CD14-positive monocyte (primary cell): ENCODE measurements at regions of chr2 and their contacts with region 1.

Region 1: GRCh38 chr2:134778368-134778767 is 59.6 kb upstream of the TMEM163 start:
- DNase-seq: no peak
- H3K4me3 ChIP-seq: no peak overlapping the region
- H3K4me3 Mint-ChIP-seq: no peak overlapping the region
- H3K27ac ChIP-seq: no peak overlapping the region
- H3K27ac Mint-ChIP-seq: no peak overlapping the region
- H3K4me1 ChIP-seq: peaks cover 6 to 12% of the 10 kb centered on the region in 2 donors
- H3K4me1 Mint-ChIP-seq: peaks cover 10% of the 10 kb centered on the region
- H3K27me3 ChIP-seq: no peaks in the 10 kb centered on the region
- H3K27me3 Mint-ChIP-seq: peaks cover 2 to 6% (median 6%) of the 10 kb centered on the region in 3 donors
- CTCF ChIP-seq: peak; percentile 21

Region 2: DNA sequence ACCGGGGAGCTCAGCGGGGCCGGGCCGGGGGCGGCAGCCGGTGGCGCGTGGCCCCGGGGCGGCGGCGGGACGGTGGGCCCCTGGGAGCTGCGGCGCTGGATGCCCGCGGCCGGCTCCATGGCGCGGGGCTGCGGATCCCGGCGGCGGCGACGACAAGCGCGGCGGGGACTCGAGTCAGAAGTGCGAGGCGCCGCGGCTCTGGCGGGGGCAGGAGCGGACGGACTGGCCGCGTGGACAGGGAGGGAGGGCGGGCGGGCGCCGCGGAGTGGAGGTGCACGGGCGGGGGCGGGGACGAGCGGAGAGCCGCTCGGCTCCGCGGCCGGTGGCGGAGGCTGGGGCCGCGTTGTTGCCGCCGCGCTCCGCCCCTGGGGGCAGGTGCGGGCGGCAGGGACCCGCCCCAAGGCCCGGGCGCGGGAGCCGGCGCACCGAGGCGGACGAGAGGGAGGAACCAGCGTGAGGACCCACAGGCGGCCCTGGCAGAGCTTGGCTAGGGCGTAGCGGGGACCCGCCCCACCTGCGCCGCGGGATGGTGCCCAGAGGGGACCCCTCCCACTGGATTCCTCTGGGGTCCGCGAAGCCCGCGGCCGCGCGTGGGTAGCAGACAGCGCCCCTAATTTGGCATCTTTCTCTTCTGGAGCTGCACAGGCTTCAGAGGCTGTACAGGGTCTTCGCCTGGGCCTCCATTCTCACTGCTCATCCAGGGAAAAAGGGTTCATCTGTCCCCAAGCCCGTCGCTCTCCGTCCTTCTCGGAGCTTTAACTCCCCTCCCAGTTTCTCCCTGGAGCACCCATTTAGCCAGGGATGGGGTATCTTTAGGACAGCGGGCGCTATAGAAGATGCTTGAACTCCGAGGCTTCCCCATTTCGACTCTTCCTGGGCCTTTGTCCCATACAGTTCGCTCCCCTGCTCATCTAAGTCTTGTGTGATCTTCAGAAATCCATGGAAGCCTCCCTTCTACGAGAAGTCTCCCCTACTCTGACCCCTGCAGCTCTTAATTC is 59.3 kb before region 1 on chr2 and contains the start of gene TMEM163:
- intact Hi-C with region 1: loop called (anchors 5 to 10 kb)
- DNase-seq: no peak
- H3K4me3 ChIP-seq: peak within 1 kb of the TSS; percentile 12 to 64 (median 14)
- H3K4me3 Mint-ChIP-seq: peak within 1 kb of the TSS; percentile 84 to 95
- H3K27ac ChIP-seq: no peak within 1 kb of the TSS
- H3K27ac Mint-ChIP-seq: peak within 1 kb of the TSS in 4 of 7 donors; percentile 4 to 82 (median 61)
- H3K4me1 ChIP-seq: peaks cover 14 to 17% of the 10 kb centered on the region in 2 donors
- H3K4me1 Mint-ChIP-seq: peaks cover 10% of the 10 kb centered on the region
- H3K27me3 ChIP-seq: peaks cover 66 to 72% of the 10 kb centered on the region in 2 donors
- H3K27me3 Mint-ChIP-seq: peaks cover 68 to 75% (median 69%) of the 10 kb centered on the region in 3 donors
- CTCF ChIP-seq: no peak
- polyA plus RNA-seq, gene TMEM163: 0.01 TPM in 1 of 3 donors, not detected in the others

Region 3: DNA sequence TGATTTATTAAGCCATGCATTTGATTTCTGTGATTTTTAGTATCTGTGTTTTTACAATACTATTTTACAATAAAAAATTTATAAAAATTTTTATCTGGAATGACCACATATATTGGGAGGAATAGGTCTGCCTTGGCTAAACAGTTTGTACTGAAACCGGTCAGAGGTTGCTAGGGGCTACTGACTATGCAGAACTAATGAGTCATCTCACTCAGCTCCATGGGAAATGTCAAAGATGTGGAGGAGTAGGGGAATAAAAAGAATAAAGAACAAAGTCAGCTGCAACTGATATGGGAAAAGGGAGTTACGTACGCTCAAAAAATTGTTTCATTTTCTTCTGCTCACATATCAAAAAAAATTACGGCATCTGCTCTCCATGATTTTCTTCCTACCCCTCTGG is 51.0 kb before region 1 on chr2:
- intact Hi-C with region 1: loop called in 1 of 2 experiments (anchors 10 kb)
- DNase-seq: no peak
- H3K4me3 ChIP-seq: no peak overlapping the region
- H3K4me3 Mint-ChIP-seq: no peak overlapping the region
- H3K27ac ChIP-seq: no peak overlapping the region
- H3K27ac Mint-ChIP-seq: no peak overlapping the region
- H3K4me1 ChIP-seq: no peaks in the 10 kb centered on the region
- H3K4me1 Mint-ChIP-seq: no peaks in the 10 kb centered on the region
- H3K27me3 ChIP-seq: peaks cover 12 to 14% of the 10 kb centered on the region in 2 donors
- H3K27me3 Mint-ChIP-seq: peaks cover 8 to 14% (median 11%) of the 10 kb centered on the region in 3 donors
- CTCF ChIP-seq: no peak

Region 4: DNA sequence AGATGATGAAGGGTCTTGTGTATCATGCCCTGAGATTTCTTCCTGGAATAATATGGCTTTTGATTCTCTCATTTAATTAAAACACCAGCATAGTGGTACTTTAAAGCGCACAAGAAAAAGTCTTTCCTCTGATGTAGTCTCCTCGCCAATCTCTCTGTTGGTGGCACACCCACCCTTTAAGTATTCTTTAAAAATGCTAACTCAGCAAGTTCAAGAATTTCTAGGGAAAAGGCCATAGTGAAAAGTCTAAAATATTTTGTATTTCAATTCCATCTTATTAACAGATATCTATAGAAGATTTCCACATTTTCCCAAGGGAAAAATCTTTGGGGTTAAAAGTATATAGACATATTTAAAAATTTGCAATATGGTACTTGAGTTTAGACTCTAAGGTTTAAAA is 94.8 kb after region 1 on chr2:
- intact Hi-C with region 1: no loop called
- DNase-seq: no peak
- H3K4me3 ChIP-seq: no peak overlapping the region
- H3K4me3 Mint-ChIP-seq: no peak overlapping the region
- H3K27ac ChIP-seq: no peak overlapping the region
- H3K27ac Mint-ChIP-seq: no peak overlapping the region
- H3K4me1 ChIP-seq: no peaks in the 10 kb centered on the region
- H3K4me1 Mint-ChIP-seq: peaks cover 5% of the 10 kb centered on the region
- H3K27me3 ChIP-seq: no peaks in the 10 kb centered on the region
- H3K27me3 Mint-ChIP-seq: peaks cover 0 to 1% (median 0%) of the 10 kb centered on the region in 3 donors
- CTCF ChIP-seq: no peak

Region 5: DNA sequence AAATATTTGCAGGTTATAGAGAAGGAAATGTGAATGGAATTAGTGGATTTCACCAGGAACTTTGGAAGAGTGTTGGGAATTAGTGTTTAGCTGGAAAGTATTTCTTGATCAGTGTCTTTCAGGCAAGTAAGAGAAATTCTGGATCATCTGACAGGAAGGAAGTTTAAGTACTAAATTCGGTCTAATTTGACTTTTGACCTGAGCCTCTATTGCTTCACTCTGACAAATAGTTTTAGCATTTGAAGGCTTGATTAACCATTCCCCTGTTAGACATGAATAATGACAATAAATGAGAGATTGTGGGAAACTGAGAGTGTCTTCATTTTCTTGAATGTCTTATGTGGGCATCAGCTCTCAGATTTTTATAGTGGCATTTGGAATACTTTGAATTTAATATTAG is 156.3 kb after region 1 on chr2:
- intact Hi-C with region 1: no loop called
- DNase-seq: no peak
- H3K4me3 ChIP-seq: peak overlapping the region in 1 of 3 experiments; percentile 15
- H3K4me3 Mint-ChIP-seq: peak overlapping the region; percentile 1 to 74
- H3K27ac ChIP-seq: peak overlapping the region in 1 of 2 donors; percentile 59
- H3K27ac Mint-ChIP-seq: peak overlapping the region in 3 of 7 donors; percentile 2 to 83 (median 22)
- H3K4me1 ChIP-seq: peaks cover 17% of the 10 kb centered on the region in 2 donors
- H3K4me1 Mint-ChIP-seq: peaks cover 34% of the 10 kb centered on the region
- H3K27me3 ChIP-seq: no peaks in the 10 kb centered on the region
- H3K27me3 Mint-ChIP-seq: no peaks in the 10 kb centered on the region
- CTCF ChIP-seq: no peak